CD4-positive, alpha-beta memory T cell (primary cell): ENCODE measurements at regions of chr11 and their contacts with region 1.

Region 1: DNA sequence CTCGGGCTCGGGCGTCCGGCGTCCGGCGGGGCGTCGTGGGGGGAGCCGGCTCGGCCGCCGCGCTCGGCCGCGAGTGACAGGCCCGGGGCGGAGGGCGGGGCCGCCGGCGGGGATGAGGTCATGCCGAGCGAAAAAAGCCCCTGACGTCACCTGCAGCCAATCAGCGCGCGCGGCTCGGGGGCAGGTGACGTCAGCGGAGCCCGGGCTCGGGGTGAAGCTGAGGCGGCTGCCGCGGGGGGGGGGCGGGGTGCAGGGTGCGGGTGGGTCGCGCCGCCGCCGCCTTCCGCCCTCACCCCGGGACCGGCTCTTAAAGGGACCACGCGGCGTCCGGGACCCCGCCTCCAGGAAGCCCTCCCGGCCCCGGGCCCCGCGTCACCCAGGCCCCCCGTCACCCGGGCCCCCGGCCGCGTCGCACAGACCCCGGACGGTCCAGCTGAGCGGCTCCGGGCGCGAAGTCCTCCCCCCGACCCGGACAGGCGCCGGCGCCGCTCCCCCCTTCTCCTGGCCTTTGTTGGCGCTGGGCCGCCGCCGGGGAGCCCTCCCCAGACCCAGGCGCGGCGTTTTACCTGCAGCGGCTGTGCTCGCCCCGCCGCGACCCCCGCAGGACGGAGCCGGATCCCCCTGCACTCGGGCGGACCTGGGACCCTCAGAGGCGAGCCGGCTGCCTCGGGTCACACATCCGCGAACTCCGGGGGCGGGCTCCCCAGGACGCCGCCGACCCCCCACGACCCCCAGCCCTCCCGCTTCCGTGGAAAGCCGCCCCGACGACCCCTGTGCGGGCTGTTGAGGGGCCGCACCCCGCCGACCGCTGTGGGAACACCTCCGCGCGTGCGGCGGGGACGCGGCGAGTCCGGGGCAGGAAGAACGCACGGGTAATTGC is at the start of gene DUSP8:
- DNase-seq: peak; percentile 94 to 96 (median 96)
- H3K4me3 ChIP-seq: peak within 1 kb of the TSS; percentile 42 to 58
- H3K4me3 Mint-ChIP-seq: peak within 1 kb of the TSS; percentile 73 to 95 (median 86)
- H3K27ac ChIP-seq: peak within 1 kb of the TSS; percentile 92
- H3K27ac Mint-ChIP-seq: peak within 1 kb of the TSS; percentile 86 to 97 (median 95)
- H3K4me1 ChIP-seq: peaks cover 30% of the 10 kb centered on the region
- H3K4me1 Mint-ChIP-seq: peaks cover 7 to 33% (median 10%) of the 10 kb centered on the region in 4 donors
- H3K27me3 ChIP-seq: no peaks in the 10 kb centered on the region
- H3K27me3 Mint-ChIP-seq: no peaks in the 10 kb centered on the region
- total RNA-seq, gene DUSP8: 5.8 TPM

Region 2: DNA sequence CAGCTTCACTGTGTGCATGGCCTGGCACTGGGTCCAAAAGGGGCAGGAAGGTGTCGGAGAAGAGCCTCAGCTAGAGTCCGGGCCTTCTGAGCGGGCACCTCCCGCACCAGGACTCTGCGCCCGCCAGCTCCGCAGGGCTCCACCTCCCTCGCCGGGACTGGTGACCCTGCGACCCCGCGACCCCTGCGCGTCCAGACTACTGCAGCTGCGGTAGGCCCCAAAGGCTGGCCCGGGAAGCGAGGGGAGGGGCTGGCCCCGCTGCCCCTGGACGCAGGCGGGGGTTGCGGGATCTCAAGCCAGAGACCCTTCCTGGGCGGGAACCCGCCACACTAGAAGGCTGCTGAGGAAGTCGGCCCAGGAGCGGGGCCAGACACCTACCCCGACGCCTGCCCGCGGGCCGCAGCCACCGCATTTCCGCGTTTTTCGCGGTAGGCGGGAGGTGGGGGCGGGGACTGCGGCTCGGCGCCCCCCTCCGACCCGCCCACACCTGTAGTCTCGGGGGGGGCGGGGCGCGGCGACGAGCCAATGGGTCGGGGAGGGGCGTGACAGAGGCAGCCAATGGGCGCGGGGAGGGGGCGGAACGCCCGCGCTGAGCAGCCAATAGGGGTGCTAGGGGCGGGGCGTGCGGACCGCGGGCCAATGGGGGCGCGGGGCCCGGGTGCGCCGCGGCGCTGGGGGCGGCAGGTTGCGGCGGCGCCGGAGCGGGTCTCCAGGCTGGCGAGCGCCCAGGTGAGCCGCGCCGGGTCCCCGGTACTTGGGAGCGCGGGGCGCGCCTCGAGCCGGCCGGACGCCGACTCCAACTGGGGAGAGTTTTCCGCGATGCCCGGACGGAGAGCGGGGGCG is 1011.9 kb before region 1 on chr11 and contains the starts of genes LMNTD2 and RASSF7:
- CTCF ChIA-PET with region 1: no interaction called
- POLR2A ChIA-PET with region 1: no interaction called
- intact Hi-C with region 1: no loop called
- DNase-seq: peak; percentile 92 to 95 (median 92)
- H3K4me3 ChIP-seq: peak within 1 kb of the TSS; percentile 69 to 75
- H3K4me3 Mint-ChIP-seq: peak within 1 kb of the TSS; percentile 84 to 94 (median 89)
- H3K27ac ChIP-seq: peak within 1 kb of the TSS; percentile 62
- H3K27ac Mint-ChIP-seq: peak within 1 kb of the TSS; percentile 80 to 93 (median 89)
- H3K4me1 ChIP-seq: peaks cover 22% of the 10 kb centered on the region
- H3K4me1 Mint-ChIP-seq: peaks cover 8 to 17% (median 13%) of the 10 kb centered on the region in 4 donors
- H3K27me3 ChIP-seq: no peaks in the 10 kb centered on the region
- H3K27me3 Mint-ChIP-seq: no peaks in the 10 kb centered on the region
- total RNA-seq, gene LMNTD2: 7.0 to 8.1 TPM
- total RNA-seq, gene RASSF7: 52.7 to 55.2 TPM

Region 3: DNA sequence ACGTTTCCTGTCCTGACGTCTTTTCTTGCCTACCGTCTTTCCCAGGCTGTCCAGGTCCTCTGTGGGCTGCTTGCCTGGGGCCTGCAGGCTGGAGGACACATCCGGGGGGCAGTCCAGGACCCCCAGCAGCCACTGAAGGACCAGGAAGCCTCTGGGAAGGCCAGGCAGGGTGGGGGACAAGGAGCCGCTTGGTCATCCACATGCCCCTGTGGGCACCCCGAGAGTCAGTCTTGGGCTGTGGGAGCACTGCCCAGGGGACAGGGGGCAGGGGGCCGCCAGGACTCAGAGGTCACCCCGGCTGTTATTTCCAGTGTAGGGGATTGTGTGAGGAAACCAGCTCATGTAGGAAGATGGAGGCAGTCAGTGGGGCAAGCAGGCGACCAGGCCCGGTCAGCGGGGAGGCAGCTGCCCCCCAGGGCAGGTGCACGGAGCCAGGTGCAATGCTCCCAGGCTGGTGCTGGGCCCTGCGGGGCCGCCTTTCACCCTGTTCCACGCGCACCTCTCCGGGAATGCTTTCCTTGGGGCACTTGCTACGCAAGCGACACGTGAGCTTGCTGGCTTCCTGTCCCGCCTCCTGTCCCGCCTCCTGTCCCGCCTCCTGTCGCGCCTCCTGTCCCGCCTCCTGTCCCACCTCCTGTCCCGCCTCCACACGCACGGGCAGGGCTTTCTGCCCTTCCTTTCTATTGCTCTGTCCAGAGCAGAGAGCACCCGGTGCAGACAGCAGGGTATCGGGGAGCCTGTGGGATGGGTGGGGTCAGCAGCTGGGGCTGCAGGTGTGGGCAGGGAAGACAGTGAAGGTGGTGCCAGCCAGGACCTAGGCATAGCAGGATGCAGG is 310.0 kb before region 1 on chr11:
- CTCF ChIA-PET with region 1: interaction called, 5 read pairs
- POLR2A ChIA-PET with region 1: interaction called, 5 read pairs
- intact Hi-C with region 1: loop called (anchors 1 kb)
- DNase-seq: peak; percentile 86 to 89 (median 87)
- H3K4me3 ChIP-seq: peak overlapping the region; percentile 65 to 71
- H3K4me3 Mint-ChIP-seq: peak overlapping the region; percentile 79 to 93 (median 86)
- H3K27ac ChIP-seq: peak overlapping the region; percentile 77
- H3K27ac Mint-ChIP-seq: peak overlapping the region; percentile 67 to 97 (median 92)
- H3K4me1 ChIP-seq: peaks cover 17% of the 10 kb centered on the region
- H3K4me1 Mint-ChIP-seq: peaks cover 7 to 23% (median 12%) of the 10 kb centered on the region in 4 donors
- H3K27me3 ChIP-seq: no peaks in the 10 kb centered on the region
- H3K27me3 Mint-ChIP-seq: no peaks in the 10 kb centered on the region

Region 4: GRCh38 chr11:1382831-1383607 is 189.4 kb before region 1 on chr11:
- CTCF ChIA-PET with region 1: interaction called, 3 read pairs
- POLR2A ChIA-PET with region 1: no interaction called
- intact Hi-C with region 1: loop called (anchors 5 kb)
- DNase-seq: peak; percentile 72 to 86 (median 74)
- H3K4me3 ChIP-seq: peak overlapping the region in 1 of 2 donors; percentile 57
- H3K4me3 Mint-ChIP-seq: peak overlapping the region; percentile 77 to 90 (median 82)
- H3K27ac ChIP-seq: peak overlapping the region; percentile 79
- H3K27ac Mint-ChIP-seq: peak overlapping the region; percentile 87 to 94 (median 92)
- H3K4me1 ChIP-seq: no peaks in the 10 kb centered on the region
- H3K4me1 Mint-ChIP-seq: peaks cover 2 to 47% (median 10%) of the 10 kb centered on the region in 4 donors
- H3K27me3 ChIP-seq: no peaks in the 10 kb centered on the region
- H3K27me3 Mint-ChIP-seq: no peaks in the 10 kb centered on the region

Region 5: DNA sequence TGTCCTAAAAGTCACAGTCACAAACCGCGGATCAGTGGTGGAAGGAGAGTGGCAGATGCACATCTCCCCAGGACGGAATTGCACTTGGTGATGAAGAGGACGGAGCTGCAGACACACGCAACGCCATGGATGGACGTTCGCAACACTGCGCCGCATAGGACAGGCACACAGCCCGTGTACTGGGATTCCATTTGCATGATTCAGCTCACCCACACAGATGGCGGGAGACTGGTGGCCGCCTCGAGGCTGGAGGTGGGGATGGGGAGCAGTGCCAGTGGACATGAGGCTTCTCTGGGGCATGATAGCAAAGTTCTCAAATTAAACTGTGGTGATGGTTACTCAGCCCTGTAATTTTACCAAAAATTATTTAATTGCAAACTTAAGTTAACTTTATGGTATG is 37.8 kb before region 1 on chr11:
- CTCF ChIA-PET with region 1: interaction called, 12 read pairs
- POLR2A ChIA-PET with region 1: interaction called, 3 read pairs
- intact Hi-C with region 1: no loop called
- DNase-seq: no peak
- H3K4me3 ChIP-seq: no peak overlapping the region
- H3K4me3 Mint-ChIP-seq: peak overlapping the region in 1 of 8 donors; percentile 23
- H3K27ac ChIP-seq: no peak overlapping the region
- H3K27ac Mint-ChIP-seq: peak overlapping the region in 1 of 7 donors; percentile 41
- H3K4me1 ChIP-seq: peaks cover 69% of the 10 kb centered on the region
- H3K4me1 Mint-ChIP-seq: peaks cover 25 to 68% (median 34%) of the 10 kb centered on the region in 4 donors
- H3K27me3 ChIP-seq: no peaks in the 10 kb centered on the region
- H3K27me3 Mint-ChIP-seq: no peaks in the 10 kb centered on the region

Region 6: GRCh38 chr11:1586699-1587098 is 14.3 kb after region 1 on chr11:
- CTCF ChIA-PET with region 1: interaction called, 49 read pairs
- POLR2A ChIA-PET with region 1: interaction called, 72 read pairs
- intact Hi-C with region 1: loop called (anchors 1 kb)
- DNase-seq: no peak
- H3K4me3 ChIP-seq: no peak overlapping the region
- H3K4me3 Mint-ChIP-seq: peak overlapping the region in 2 of 8 donors; percentile 18 to 38
- H3K27ac ChIP-seq: no peak overlapping the region
- H3K27ac Mint-ChIP-seq: peak overlapping the region in 5 of 7 donors; percentile 26 to 86 (median 47)
- H3K4me1 ChIP-seq: peaks cover 38% of the 10 kb centered on the region
- H3K4me1 Mint-ChIP-seq: peaks cover 25 to 46% (median 33%) of the 10 kb centered on the region in 4 donors
- H3K27me3 ChIP-seq: no peaks in the 10 kb centered on the region
- H3K27me3 Mint-ChIP-seq: no peaks in the 10 kb centered on the region

Region 7: GRCh38 chr11:1613516-1613915 is 41.1 kb after region 1 on chr11:
- CTCF ChIA-PET with region 1: no interaction called
- POLR2A ChIA-PET with region 1: no interaction called
- intact Hi-C with region 1: no loop called
- DNase-seq: no peak
- H3K4me3 ChIP-seq: no peak overlapping the region
- H3K4me3 Mint-ChIP-seq: no peak overlapping the region
- H3K27ac ChIP-seq: no peak overlapping the region
- H3K27ac Mint-ChIP-seq: no peak overlapping the region
- H3K4me1 ChIP-seq: no peaks in the 10 kb centered on the region
- H3K4me1 Mint-ChIP-seq: no peaks in the 10 kb centered on the region
- H3K27me3 ChIP-seq: no peaks in the 10 kb centered on the region
- H3K27me3 Mint-ChIP-seq: peaks cover 7 to 19% of the 10 kb centered on the region in 2 donors

Region 8: DNA sequence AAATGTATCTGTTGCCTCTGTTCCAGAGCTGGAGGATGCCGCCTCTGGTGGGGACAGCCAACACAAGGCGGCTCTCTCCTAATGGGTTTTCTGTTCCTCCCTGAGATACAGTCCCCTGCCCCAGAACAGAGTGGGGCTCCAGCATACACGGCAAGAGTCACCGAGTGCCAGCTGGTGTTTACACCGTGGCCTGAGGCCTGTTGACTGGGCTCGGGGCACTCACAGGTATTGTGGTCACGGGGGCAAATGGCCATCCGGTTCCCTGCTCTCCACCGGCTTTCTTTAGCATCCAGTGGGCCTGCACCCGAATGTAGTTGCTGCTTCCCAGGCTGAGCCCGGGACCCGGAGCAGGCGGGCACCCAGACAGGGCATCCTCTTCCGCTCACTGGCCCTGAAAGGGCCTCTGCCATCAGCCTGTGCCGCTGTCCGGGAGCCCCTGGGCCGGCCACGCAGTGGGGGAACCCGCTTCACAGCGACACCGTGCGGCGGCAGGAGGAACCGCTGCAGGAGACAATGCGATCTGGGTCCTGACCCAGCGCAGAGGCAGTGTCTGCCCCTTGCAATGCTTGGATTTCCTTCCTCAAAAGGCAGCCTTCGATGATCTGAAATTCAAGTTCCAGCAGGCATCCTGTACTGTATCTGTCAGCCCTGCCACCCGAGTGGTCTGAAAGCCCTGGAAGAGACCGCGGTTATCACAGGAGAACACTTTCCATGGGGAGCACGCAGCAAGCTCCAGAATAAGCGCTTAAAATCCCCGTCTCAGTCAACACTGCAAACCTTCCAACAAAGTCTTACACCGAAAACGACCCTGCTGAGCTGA is 56.3 kb after region 1 on chr11:
- CTCF ChIA-PET with region 1: interaction called, 17 read pairs
- POLR2A ChIA-PET with region 1: interaction called, 3 read pairs
- intact Hi-C with region 1: no loop called
- DNase-seq: peak; percentile 48 to 66 (median 51)
- H3K4me3 ChIP-seq: no peak overlapping the region
- H3K4me3 Mint-ChIP-seq: peak overlapping the region in 2 of 8 donors; percentile 26 to 44
- H3K27ac ChIP-seq: no peak overlapping the region
- H3K27ac Mint-ChIP-seq: peak overlapping the region in 2 of 7 donors; percentile 37 to 83
- H3K4me1 ChIP-seq: peaks cover 8% of the 10 kb centered on the region
- H3K4me1 Mint-ChIP-seq: peaks cover 0 to 9% (median 7%) of the 10 kb centered on the region in 4 donors
- H3K27me3 ChIP-seq: peaks cover 8% of the 10 kb centered on the region
- H3K27me3 Mint-ChIP-seq: peaks cover 19 to 26% of the 10 kb centered on the region in 2 donors

Region 9: DNA sequence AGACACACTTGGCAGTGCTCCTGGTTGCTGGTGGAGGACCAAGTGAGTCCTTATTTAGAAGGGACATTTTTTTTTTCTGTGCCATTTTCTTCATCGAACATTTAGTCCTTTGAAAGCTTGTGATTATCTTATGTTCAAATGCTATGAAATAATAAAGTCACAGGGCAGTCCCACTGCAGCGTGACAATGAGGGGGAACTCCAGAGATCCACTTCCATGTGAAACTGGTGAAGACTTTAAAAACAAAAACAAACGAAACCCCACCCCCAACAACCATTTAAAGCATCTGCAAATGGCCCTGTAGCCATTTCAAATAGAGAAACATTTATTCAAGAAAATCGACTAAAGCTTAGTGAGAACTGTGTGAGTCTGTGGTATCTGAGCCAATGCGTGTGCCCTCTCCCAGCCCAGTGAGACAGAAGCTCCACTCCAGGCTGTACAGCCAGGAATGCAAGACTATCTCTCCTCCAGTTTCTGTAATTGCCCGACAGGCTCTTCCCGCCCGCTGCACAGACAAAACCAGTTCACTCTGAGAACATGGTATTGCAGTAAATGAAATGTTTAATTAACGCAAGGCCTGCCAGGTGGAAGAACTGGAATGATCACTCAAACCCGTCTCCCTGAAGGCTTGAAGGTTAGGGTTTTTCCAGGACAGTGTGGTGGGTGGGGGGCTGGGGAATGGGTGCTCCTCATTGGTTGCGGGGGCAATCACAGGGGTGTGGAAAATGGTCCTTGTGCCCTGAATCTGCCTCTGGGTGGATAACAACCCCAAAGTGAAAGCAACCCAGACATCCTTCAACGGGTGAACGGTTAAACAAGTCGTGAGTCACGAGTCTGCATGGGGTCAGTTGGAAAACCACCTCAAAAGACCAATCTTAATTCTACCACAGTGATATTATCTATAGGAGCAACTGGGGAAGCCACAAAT is 133.0 kb after region 1 on chr11:
- CTCF ChIA-PET with region 1: no interaction called
- POLR2A ChIA-PET with region 1: no interaction called
- intact Hi-C with region 1: no loop called
- DNase-seq: no peak
- H3K4me3 ChIP-seq: no peak overlapping the region
- H3K4me3 Mint-ChIP-seq: peak overlapping the region in 3 of 8 donors; percentile 32 to 52 (median 40)
- H3K27ac ChIP-seq: no peak overlapping the region
- H3K27ac Mint-ChIP-seq: no peak overlapping the region
- H3K4me1 ChIP-seq: no peaks in the 10 kb centered on the region
- H3K4me1 Mint-ChIP-seq: peaks cover 0 to 10% (median 10%) of the 10 kb centered on the region in 4 donors
- H3K27me3 ChIP-seq: no peaks in the 10 kb centered on the region
- H3K27me3 Mint-ChIP-seq: peaks cover 4 to 23% of the 10 kb centered on the region in 2 donors

Region 10: DNA sequence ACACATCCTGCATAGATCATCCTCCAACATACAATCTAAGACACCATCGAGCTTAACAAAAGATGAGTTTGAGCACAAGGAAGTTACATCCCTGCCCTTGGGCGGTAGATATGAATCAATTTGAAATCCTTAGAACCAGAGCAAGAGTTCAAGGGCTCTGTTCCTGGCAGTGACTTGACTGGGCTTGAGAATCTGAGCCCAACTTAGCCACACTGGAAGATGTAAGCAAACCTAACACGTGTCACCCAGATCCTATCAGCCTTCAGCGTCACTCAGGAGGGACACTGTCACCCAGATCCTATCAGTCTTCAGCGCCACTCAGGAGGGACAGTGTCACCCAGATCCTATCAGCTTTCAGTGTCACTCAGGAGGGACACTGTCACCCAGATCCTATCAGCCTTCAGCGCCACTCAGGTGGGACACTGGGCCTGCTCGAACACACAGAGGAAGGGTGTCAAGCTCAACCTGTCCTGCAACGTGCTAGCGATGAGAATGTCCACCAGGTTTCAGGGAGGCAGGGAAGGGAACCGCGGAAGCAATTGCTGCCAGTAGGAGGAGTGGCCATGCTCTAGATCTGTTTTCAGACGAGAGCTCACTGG is 224.1 kb after region 1 on chr11:
- CTCF ChIA-PET with region 1: no interaction called
- POLR2A ChIA-PET with region 1: no interaction called
- intact Hi-C with region 1: no loop called
- DNase-seq: no peak
- H3K4me3 ChIP-seq: no peak overlapping the region
- H3K4me3 Mint-ChIP-seq: no peak overlapping the region
- H3K27ac ChIP-seq: no peak overlapping the region
- H3K27ac Mint-ChIP-seq: peak overlapping the region in 1 of 7 donors; percentile 27
- H3K4me1 ChIP-seq: peaks cover 5% of the 10 kb centered on the region
- H3K4me1 Mint-ChIP-seq: peaks cover 0 to 5% (median 3%) of the 10 kb centered on the region in 4 donors
- H3K27me3 ChIP-seq: no peaks in the 10 kb centered on the region
- H3K27me3 Mint-ChIP-seq: peaks cover 26 to 29% of the 10 kb centered on the region in 2 donors